HEK293 (cell line): ENCODE measurements at regions of chr19 and their contacts with region 1.

Region 1: DNA sequence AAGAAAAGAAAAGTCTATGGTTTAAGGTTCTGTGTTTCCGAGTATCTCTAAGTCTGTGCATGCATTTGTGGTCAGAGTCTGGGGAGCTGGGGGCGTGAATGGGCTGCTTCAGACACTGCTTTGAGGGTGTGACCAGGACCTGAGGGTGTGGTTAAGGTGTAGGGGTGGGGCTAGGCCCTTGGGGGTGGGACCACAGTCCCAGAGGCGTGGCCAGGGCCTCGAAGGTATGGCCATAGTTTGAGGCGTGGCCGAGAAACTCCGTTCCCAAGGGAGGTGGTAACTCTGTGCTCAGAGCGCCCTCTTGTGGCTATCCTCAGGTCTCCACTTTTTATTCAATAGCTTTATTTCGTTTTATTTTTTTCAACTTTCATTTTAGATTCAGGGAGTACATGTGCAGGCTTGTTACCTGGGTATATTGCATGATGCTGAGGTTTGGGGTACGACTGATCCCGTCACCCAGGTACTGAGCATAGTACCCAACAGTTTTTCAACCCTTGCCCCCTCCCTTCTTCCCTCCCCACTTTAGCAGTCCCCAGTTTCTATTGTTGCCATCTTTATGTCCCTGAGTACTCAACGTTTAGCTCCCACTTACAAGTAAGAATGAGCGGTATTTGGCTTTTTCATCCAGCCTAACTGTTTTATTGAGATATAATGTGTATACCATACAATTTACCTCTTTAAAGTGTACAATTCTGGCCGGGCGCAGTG is 7.0 kb upstream of the CBLC start:
- H3K4me3 ChIP-seq: no peak overlapping the region
- H3K27ac ChIP-seq: no peak overlapping the region
- H3K4me1 ChIP-seq: 0 out of 2 replicates have a peak, but pooled peaks cover 4% of the 10 kb centered on the region
- CTCF ChIP-seq: peak; percentile 77

Region 2: DNA sequence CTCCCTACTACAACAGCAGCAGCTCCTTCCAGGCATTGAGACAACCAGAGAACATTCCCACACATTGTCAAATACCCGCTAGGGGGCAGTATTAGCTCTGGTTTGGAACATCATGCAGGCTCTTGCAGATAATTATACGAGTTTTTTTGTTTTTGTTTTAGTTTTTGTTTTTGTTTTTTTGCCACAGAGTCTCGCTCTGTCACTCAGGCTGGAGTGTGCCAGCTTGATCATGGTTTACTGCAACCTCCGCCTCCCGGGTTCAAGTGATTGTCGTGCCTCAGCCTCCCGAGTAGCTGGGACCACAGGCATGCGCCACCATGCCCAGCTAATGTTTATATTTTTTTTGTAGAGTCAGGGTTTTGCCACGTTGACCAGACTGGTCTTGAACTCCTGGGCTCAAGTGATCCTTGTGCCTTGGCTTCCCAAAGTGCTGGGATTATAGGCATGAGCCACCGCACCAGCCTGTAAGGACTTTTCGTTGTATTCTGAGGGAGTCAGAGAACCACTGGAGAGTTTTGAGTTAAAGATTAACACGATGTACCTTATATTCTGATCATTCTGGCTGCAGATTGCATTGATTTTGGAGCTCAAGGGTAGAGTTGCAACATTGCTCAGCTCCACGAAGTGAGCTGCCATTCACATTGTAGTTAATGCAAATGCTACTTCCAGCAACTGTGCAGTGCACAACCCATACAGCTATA is 199.6 kb before region 1 on chr19:
- CTCF ChIA-PET with region 1: interaction called, 30 read pairs
- POLR2A ChIA-PET with region 1: interaction called, 5 read pairs
- H3K4me3 ChIP-seq: no peak overlapping the region
- H3K27ac ChIP-seq: no peak overlapping the region
- H3K4me1 ChIP-seq: no peaks in the 10 kb centered on the region
- CTCF ChIP-seq: no peak

Region 3: DNA sequence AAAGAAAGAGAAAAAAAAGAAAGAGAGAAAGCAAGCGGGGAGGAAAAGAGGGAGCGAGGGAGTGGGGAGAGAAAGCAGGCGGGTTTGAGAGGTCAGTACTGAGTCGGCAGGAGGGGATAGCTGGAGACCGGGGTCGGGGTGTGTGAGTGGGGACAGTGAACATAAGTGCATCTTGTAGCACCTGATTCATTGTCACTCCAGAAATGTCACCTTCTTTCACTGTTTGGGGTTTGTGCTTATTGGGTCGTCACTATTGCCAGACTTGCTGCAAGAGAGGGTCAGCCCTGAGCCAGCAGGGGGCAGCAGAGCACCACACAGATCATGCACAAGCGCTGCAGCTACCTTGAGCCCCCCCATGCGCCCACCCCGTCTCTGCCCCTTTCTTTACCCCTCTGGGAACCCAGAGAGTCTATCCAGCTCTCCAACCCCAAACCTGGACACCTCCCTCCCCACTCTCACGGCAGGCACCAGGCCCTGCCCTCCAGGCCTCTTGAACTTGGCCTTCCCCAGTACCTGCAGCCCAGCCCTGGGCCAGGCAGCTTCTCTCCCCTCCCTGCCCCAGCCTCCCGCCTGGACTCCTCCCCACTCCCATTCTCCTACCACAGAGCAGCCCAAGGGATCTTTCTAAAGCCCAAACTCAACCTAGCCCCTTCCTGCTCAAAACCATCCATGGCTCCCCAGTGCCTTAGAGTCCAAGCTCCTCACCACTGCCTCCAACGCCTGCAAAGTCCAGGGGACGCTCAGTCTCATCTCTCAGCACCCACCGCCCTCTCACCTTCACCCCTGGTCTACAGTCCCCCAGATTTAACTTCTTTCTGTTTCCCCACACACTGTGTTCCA is 81.4 kb before region 1 on chr19:
- CTCF ChIA-PET with region 1: interaction called, 106 read pairs
- POLR2A ChIA-PET with region 1: interaction called, 5 read pairs
- H3K4me3 ChIP-seq: no peak overlapping the region
- H3K27ac ChIP-seq: no peak overlapping the region
- H3K4me1 ChIP-seq: 0 out of 2 replicates have a peak, but pooled peaks cover 3% of the 10 kb centered on the region
- CTCF ChIP-seq: peak; percentile 93

Region 4: GRCh38 chr19:44734986-44735385 is 35.7 kb before region 1 on chr19:
- CTCF ChIA-PET with region 1: interaction called, 453 read pairs
- POLR2A ChIA-PET with region 1: no interaction called
- H3K4me3 ChIP-seq: no peak overlapping the region
- H3K27ac ChIP-seq: no peak overlapping the region
- H3K4me1 ChIP-seq: no peaks in the 10 kb centered on the region
- CTCF ChIP-seq: no peak

Region 5: GRCh38 chr19:44782729-44783128 is 12.0 kb after region 1 on chr19:
- CTCF ChIA-PET with region 1: interaction called, 28 read pairs
- POLR2A ChIA-PET with region 1: interaction called, 4 read pairs
- H3K4me3 ChIP-seq: no peak overlapping the region
- H3K27ac ChIP-seq: no peak overlapping the region
- H3K4me1 ChIP-seq: no peaks in the 10 kb centered on the region
- CTCF ChIP-seq: no peak

Region 6: DNA sequence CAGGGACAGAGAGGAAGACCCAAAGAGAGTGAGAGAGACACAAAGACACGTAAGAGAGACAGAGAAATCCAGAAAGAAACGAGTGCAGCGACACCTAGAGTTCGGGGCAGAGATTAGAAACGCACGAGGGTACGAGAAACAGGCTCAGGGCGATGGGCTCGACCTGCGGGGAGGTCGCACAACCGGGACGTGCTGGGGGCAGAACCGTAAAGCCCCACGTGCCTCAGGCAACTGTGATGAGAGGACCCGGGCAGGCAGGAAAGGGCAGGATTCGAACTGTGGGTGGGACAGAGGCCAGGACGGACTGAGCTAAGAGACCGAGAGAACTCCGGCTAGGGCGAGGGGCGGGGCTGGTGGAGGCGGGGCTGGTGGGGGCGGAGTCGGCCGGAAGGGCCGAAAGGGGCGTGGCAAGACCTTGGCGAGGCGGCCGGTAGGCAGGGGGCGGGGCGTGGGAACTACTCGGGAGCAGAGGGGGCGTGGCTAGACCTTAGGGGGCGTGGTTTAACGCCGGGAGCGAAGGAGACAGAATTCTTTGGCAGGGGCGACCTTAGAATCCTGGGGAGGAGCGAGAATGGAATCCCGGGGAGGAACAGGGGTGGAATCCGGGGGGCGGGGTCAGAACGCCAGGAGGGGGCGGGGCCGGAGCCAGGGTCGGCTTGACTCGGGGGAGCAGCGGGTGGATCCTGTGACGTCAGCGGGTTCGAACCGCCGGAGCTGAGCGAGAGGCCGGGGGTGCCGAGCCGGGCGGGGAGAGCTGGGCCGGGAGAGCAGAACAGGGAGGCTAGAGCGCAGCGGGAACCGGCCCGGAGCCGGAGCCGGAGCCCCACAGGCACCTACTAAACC is 75.1 kb after region 1 on chr19 and contains the start of gene NECTIN2:
- CTCF ChIA-PET with region 1: interaction called, 16 read pairs
- POLR2A ChIA-PET with region 1: interaction called, 4 read pairs
- H3K4me3 ChIP-seq: peak within 1 kb of the TSS; percentile 85
- H3K27ac ChIP-seq: peak within 1 kb of the TSS; percentile 93
- H3K4me1 ChIP-seq: peaks cover 25% of the 10 kb centered on the region
- CTCF ChIP-seq: peak; percentile 99